ENCODE measurements at regions of chr19 and their contacts with region 1.

Region 1: DNA sequence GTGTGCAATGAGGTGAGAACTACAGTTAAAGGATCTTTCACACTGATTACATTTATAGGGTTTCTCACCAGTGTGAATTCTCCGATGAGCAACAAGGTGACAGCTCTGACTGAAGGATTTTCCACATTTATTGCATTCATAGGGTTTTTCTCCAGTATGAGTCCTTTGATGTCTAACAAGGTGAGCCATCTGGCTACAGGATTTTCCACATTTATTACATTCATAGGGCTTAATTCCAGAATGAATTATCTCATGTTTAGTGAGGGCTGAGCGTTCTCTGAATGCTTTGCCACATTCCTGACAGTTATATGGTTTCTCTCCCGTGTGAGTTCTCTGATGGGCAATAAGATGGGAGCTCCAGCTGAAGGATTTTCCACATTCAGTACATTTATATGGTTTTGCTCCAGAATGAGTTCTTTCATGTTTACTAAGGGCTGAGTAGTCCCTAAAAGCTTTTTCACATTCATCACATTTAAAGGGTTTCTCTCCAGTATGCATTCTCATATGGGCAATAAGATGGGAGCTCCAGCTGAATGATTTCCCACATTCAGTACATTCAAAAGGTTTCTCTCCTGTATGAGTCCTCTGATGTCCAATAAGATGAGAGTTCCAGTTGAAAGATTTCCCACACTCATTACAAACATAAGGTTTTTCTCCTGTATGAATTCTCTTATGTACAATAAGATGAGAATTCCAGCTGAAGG is 4.4 kb upstream of the C19orf18 start:
- DNase-seq: no peak
- ATAC-seq: no peak
- H3K4me3 ChIP-seq: no peak overlapping the region
- H3K27ac ChIP-seq: no peak overlapping the region
- H3K4me1 ChIP-seq: no peaks in the 10 kb centered on the region
- H3K27me3 ChIP-seq: no peaks in the 10 kb centered on the region
- CTCF ChIP-seq: no peak
- POLR2A ChIP-seq: no peak

Region 2: DNA sequence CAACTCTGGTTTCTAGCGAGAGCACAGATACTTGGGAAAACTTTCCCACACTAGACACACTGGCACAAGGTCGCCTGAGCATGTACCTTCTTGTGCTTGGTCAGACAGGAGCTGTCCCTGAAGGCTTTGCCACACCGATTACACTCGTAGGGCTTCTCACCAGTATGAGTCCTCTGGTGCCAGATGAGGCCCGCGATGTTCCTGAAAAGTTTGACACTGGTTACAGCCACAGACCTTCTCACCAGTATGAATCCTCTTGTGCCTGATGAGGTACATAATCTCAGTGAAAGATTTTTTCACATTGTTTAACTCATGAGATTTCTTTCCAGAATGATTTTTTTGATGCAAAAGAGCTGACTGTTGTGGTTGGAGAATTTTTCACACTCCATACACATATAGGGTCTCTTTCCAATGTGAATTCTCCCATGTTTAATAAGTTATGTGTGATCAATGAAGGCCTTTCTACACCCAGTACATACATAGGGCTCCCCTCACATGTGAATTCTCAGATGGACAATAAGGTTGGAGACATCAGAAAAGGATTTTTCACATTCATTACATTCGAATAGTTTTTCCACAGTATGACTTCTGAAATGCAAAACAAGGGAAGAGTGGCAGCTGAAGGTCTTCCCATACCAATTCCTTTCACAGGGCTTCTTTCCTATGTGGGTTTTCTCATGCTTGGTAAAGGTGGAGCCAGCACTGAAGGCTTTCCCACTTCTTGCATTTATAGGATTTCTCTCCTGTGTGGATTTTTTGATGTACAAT is 129.2 kb after region 1 on chr19:
- intact Hi-C with region 1: no loop called
- DNase-seq: no peak
- ATAC-seq: no peak
- H3K4me3 ChIP-seq: no peak overlapping the region
- H3K27ac ChIP-seq: no peak overlapping the region
- H3K4me1 ChIP-seq: no peaks in the 10 kb centered on the region
- H3K27me3 ChIP-seq: no peaks in the 10 kb centered on the region
- CTCF ChIP-seq: no peak
- POLR2A ChIP-seq: no peak

Region 3: GRCh38 chr19:58128041-58128685 is 149.4 kb after region 1 on chr19:
- intact Hi-C with region 1: loop called in 2 of 10 experiments (anchors 5 to 10 kb)
- DNase-seq: no peak
- ATAC-seq: no peak
- H3K4me3 ChIP-seq: no peak overlapping the region
- H3K27ac ChIP-seq: no peak overlapping the region
- H3K4me1 ChIP-seq: no peaks in the 10 kb centered on the region
- H3K27me3 ChIP-seq: no peaks in the 10 kb centered on the region
- CTCF ChIP-seq: no peak
- POLR2A ChIP-seq: no peak

Region 4: GRCh38 chr19:58203814-58204475 is 225.2 kb after region 1 on chr19:
- intact Hi-C with region 1: loop called in 1 of 10 experiments (anchors 5 kb)
- DNase-seq: no peak
- ATAC-seq: peak in 1 of 4 donors; percentile 16
- H3K4me3 ChIP-seq: no peak overlapping the region
- H3K27ac ChIP-seq: no peak overlapping the region
- H3K4me1 ChIP-seq: no peaks in the 10 kb centered on the region
- H3K27me3 ChIP-seq: no peaks in the 10 kb centered on the region
- CTCF ChIP-seq: no peak
- POLR2A ChIP-seq: no peak